ENCODE measurements at regions of chr13 and their contacts with region 1.

Region 1: DNA sequence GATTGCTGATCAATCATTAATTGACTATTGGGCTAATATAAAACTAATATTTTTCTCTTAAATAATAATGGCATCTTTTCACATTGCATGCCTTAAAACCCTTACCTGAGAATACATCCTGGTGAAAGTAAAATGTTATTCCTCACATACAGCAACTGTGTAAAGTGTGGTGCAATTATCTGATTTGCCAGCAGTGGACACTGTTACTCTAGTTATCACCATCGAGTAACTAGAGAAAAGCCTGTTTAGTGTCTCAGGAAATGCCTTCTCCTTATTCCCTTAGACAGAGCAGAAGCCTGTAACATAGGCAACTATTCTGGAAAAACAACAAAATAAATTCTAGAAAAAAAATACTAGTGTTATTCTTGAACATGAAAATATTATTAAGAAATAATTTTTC is 459.8 kb downstream of the FGF14 start:
- DNase-seq: peak; percentile 34
- H3K4me3 ChIP-seq: peak overlapping the region in 1 of 2 experiments; percentile 42; a peak in 1 of 4 replicates
- H3K27ac ChIP-seq: peak overlapping the region in 1 of 2 experiments; percentile 94; a peak in 2 of 4 replicates
- H3K4me1 ChIP-seq: peaks cover 0 to 21% of the 10 kb centered on the region in 2 experiments; a peak in 2 of 4 replicates
- H3K27me3 ChIP-seq: no peaks in the 10 kb centered on the region
- CTCF ChIP-seq: peak; percentile 84
- EP300 ChIP-seq: no peak
- RAD21 ChIP-seq: peak; percentile 96

Region 2: DNA sequence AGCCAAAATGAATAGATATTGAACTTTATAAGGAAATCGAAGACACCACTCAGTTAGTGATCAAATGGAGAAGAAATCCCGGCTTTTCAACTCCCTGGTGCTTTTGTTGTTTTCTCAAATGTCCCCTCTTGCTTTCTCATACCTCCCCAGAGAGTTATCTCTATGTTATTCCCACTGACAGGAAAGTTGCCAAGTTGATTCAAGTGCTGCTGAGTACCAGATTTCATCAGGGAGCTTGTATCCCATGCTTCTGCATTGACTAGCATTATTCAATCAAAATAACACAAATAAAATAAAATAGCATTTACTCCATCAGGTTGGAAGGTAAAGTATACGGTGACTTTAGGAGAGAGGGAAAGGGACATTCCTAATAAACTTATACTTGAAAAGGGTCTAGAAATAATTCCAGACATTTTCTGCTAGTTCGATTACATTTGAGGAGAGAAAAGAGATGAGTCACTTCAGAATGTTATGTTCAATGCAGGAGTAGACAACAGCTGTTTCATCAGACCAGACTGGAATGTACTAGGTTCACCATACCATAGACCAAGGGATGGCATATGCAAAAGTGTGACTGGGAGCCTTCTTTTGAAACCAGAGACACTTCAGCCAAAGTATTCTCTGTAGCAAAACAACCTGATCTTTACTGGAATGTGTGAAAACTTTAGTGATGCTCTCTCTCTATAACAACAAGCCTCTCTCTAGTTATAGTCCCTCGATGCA is 62.0 kb after region 1 on chr13:
- CTCF ChIA-PET with region 1: no interaction called
- POLR2A ChIA-PET with region 1: no interaction called
- DNase-seq: no peak
- H3K4me3 ChIP-seq: no peak overlapping the region
- H3K27ac ChIP-seq: peak overlapping the region in 1 of 2 experiments; percentile 11; a peak in 1 of 4 replicates
- H3K4me1 ChIP-seq: peaks cover 0 to 13% of the 10 kb centered on the region in 2 experiments; a peak in 2 of 4 replicates
- H3K27me3 ChIP-seq: no peaks in the 10 kb centered on the region
- CTCF ChIP-seq: no peak
- EP300 ChIP-seq: no peak
- RAD21 ChIP-seq: no peak

Region 3: GRCh38 chr13:102089177-102089576 is 147.1 kb after region 1 on chr13:
- CTCF ChIA-PET with region 1: interaction called, 14 read pairs
- POLR2A ChIA-PET with region 1: no interaction called
- DNase-seq: no peak
- H3K4me3 ChIP-seq: no peak overlapping the region
- H3K27ac ChIP-seq: peak overlapping the region in 1 of 2 experiments; percentile 58; a peak in 2 of 4 replicates
- H3K4me1 ChIP-seq: peaks cover 0 to 6% of the 10 kb centered on the region in 2 experiments; a peak in 1 of 4 replicates
- H3K27me3 ChIP-seq: no peaks in the 10 kb centered on the region
- CTCF ChIP-seq: peak; percentile 53
- EP300 ChIP-seq: no peak
- RAD21 ChIP-seq: peak; percentile 41; the same call in 1 of the 2 replicates

Region 4: GRCh38 chr13:102141625-102142472 is 199.8 kb after region 1 on chr13:
- CTCF ChIA-PET with region 1: interaction called, 20 read pairs
- POLR2A ChIA-PET with region 1: no interaction called
- DNase-seq: no peak
- H3K4me3 ChIP-seq: no peak overlapping the region
- H3K27ac ChIP-seq: peak overlapping the region in 1 of 2 experiments; percentile 99; a peak in 2 of 4 replicates
- H3K4me1 ChIP-seq: peaks cover 0 to 40% of the 10 kb centered on the region in 2 experiments; a peak in 3 of 4 replicates
- H3K27me3 ChIP-seq: no peaks in the 10 kb centered on the region
- CTCF ChIP-seq: peak; percentile 92
- EP300 ChIP-seq: no peak
- RAD21 ChIP-seq: peak; percentile 74

Region 5: GRCh38 chr13:102402290-102402689 is 460.3 kb after region 1 on chr13:
- CTCF ChIA-PET with region 1: interaction called, 22 read pairs
- POLR2A ChIA-PET with region 1: interaction called, 4 read pairs
- DNase-seq: peak; percentile 88
- H3K4me3 ChIP-seq: peak overlapping the region; percentile 67 to 83
- H3K27ac ChIP-seq: peak overlapping the region in 1 of 2 experiments; percentile 96; a peak in 2 of 4 replicates
- H3K4me1 ChIP-seq: peaks cover 0 to under 1% of the 10 kb centered on the region in 2 experiments; a peak in 2 of 4 replicates
- H3K27me3 ChIP-seq: no peaks in the 10 kb centered on the region
- CTCF ChIP-seq: peak; percentile 30
- EP300 ChIP-seq: no peak; a peak in 1 of 4 replicates
- RAD21 ChIP-seq: peak; percentile 62

Region 6: DNA sequence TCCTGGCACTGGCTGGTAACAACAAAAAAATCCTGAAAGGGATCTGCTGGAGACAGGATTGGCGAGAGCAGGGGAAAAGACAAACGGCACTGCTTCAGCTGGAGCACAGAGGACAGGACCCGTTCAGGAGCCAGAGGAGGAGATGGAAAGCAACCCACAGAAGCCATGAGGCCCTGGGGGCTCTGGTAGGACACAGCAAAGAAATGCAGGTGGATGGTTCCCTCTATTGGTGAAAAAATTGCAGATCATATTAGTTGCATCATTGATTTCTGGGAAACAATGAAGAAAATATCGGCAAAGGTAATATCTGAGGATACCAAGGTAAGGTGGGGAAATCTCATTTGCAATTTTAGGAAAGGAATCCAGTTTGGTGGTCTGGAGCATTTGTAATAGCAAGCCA is 629.0 kb after region 1 on chr13:
- CTCF ChIA-PET with region 1: interaction called, 13 read pairs
- POLR2A ChIA-PET with region 1: no interaction called
- DNase-seq: peak; percentile 37
- H3K4me3 ChIP-seq: no peak overlapping the region
- H3K27ac ChIP-seq: no peak overlapping the region
- H3K4me1 ChIP-seq: peaks cover 0 to 12% of the 10 kb centered on the region in 2 experiments; a peak in 2 of 4 replicates
- H3K27me3 ChIP-seq: 0 out of 2 replicates have a peak, but pooled peaks cover 5% of the 10 kb centered on the region
- CTCF ChIP-seq: no peak
- EP300 ChIP-seq: no peak
- RAD21 ChIP-seq: peak; percentile 73

Measured in SK-N-SH (cell line).